ENCODE measurements at regions of chr6 and their contacts with region 1.

Region 1: GRCh38 chr6:70221025-70221714 is 81.7 kb downstream of the COL9A1 start:
- DNase-seq: peak; percentile 20
- ATAC-seq: peak; percentile 87
- H3K4me3 ChIP-seq: no peak overlapping the region
- H3K27ac ChIP-seq: no peak overlapping the region
- H3K4me1 ChIP-seq: no peaks in the 10 kb centered on the region
- H3K27me3 ChIP-seq: peaks cover 6% of the 10 kb centered on the region
- CTCF ChIP-seq: peak; percentile 62
- POLR2A ChIP-seq: no peak
- RAD21 ChIP-seq: peak; percentile 72

Region 2: DNA sequence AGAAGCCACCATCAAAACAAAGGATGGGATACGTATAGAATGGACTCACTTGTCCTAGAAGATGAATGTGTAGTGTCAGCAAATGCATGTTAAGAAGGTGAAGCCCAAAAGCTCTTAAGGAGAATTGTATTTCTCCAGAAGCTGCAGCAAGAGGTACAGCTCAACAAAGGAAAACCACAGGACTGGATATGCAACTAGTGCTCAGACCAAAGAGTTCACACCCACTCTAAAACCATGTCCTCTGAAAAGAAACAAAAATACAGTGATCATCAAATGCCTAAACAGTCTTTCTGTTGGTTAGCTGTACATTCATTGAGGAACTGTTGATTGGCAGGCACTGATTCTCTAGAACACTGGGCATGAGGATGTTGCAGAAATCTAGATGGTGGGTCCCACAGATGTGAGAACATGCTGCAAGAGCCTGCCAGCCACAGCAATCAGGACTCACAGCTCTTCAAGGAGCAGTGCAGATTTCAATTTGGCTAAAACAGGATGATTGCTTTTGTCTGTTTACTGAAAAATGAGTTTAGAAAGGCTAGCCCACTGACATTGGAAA is 12.9 kb before region 1 on chr6:
- CTCF ChIA-PET with region 1: interaction called, 17 read pairs
- POLR2A ChIA-PET with region 1: no interaction called
- dilution Hi-C with region 1: no loop called
- in situ Hi-C with region 1: no loop called
- intact Hi-C with region 1: no loop called
- DNase-seq: no peak
- ATAC-seq: no peak
- H3K4me3 ChIP-seq: no peak overlapping the region
- H3K27ac ChIP-seq: no peak overlapping the region
- H3K4me1 ChIP-seq: no peaks in the 10 kb centered on the region
- H3K27me3 ChIP-seq: peaks cover 2% of the 10 kb centered on the region; the same call in 1 of the 2 replicates
- CTCF ChIP-seq: no peak
- POLR2A ChIP-seq: no peak
- RAD21 ChIP-seq: no peak

Region 3: GRCh38 chr6:70289299-70289698 is 68.1 kb after region 1 on chr6:
- CTCF ChIA-PET with region 1: no interaction called
- POLR2A ChIA-PET with region 1: no interaction called
- dilution Hi-C with region 1: no loop called
- in situ Hi-C with region 1: no loop called
- intact Hi-C with region 1: loop called (anchors 1 kb)
- DNase-seq: no peak
- ATAC-seq: no peak
- H3K4me3 ChIP-seq: no peak overlapping the region
- H3K27ac ChIP-seq: no peak overlapping the region
- H3K4me1 ChIP-seq: no peaks in the 10 kb centered on the region
- H3K27me3 ChIP-seq: peaks cover 2% of the 10 kb centered on the region
- CTCF ChIP-seq: 0 out of 2 replicates have a peak, but pooled peaks have one; percentile 2
- POLR2A ChIP-seq: no peak
- RAD21 ChIP-seq: no peak

Region 4: GRCh38 chr6:70310063-70310694 is 89.0 kb after region 1 on chr6:
- CTCF ChIA-PET with region 1: interaction called, 10 read pairs
- POLR2A ChIA-PET with region 1: no interaction called
- dilution Hi-C with region 1: no loop called
- in situ Hi-C with region 1: no loop called
- intact Hi-C with region 1: loop called (anchors 2 kb)
- DNase-seq: peak; percentile 53
- ATAC-seq: no peak; the same call in 1 of the 2 replicates
- H3K4me3 ChIP-seq: no peak overlapping the region
- H3K27ac ChIP-seq: no peak overlapping the region
- H3K4me1 ChIP-seq: no peaks in the 10 kb centered on the region
- H3K27me3 ChIP-seq: peaks cover 33% of the 10 kb centered on the region
- CTCF ChIP-seq: peak; percentile 73
- POLR2A ChIP-seq: no peak
- RAD21 ChIP-seq: peak; percentile 56

Region 5: GRCh38 chr6:70686548-70687133 is 465.5 kb after region 1 on chr6:
- CTCF ChIA-PET with region 1: interaction called, 3 read pairs
- POLR2A ChIA-PET with region 1: no interaction called
- dilution Hi-C with region 1: no loop called
- in situ Hi-C with region 1: loop called (anchors 25 kb)
- intact Hi-C with region 1: loop called (anchors 5 kb)
- DNase-seq: peak; percentile 56
- ATAC-seq: peak; percentile 76
- H3K4me3 ChIP-seq: no peak overlapping the region
- H3K27ac ChIP-seq: no peak overlapping the region
- H3K4me1 ChIP-seq: no peaks in the 10 kb centered on the region
- H3K27me3 ChIP-seq: no peaks in the 10 kb centered on the region
- CTCF ChIP-seq: peak; percentile 73
- POLR2A ChIP-seq: no peak
- RAD21 ChIP-seq: peak; percentile 60

Region 6: GRCh38 chr6:70955441-70956190 is 734.4 kb after region 1 on chr6:
- CTCF ChIA-PET with region 1: interaction called, 3 read pairs
- POLR2A ChIA-PET with region 1: no interaction called
- dilution Hi-C with region 1: no loop called
- in situ Hi-C with region 1: no loop called
- intact Hi-C with region 1: loop called (anchors 2 kb)
- DNase-seq: peak; percentile 65
- ATAC-seq: peak; percentile 92
- H3K4me3 ChIP-seq: peak overlapping the region; percentile 33
- H3K27ac ChIP-seq: no peak overlapping the region
- H3K4me1 ChIP-seq: no peaks in the 10 kb centered on the region
- H3K27me3 ChIP-seq: peaks cover 46% of the 10 kb centered on the region
- CTCF ChIP-seq: peak; percentile 68
- POLR2A ChIP-seq: no peak
- RAD21 ChIP-seq: peak; percentile 59